Activated naive CD4-positive, alpha-beta T cell treated with anti-CD3 and anti-CD28 coated beads for 36 hours (primary cell): ENCODE measurements at regions of chr6 and their contacts with region 1.

Region 1: DNA sequence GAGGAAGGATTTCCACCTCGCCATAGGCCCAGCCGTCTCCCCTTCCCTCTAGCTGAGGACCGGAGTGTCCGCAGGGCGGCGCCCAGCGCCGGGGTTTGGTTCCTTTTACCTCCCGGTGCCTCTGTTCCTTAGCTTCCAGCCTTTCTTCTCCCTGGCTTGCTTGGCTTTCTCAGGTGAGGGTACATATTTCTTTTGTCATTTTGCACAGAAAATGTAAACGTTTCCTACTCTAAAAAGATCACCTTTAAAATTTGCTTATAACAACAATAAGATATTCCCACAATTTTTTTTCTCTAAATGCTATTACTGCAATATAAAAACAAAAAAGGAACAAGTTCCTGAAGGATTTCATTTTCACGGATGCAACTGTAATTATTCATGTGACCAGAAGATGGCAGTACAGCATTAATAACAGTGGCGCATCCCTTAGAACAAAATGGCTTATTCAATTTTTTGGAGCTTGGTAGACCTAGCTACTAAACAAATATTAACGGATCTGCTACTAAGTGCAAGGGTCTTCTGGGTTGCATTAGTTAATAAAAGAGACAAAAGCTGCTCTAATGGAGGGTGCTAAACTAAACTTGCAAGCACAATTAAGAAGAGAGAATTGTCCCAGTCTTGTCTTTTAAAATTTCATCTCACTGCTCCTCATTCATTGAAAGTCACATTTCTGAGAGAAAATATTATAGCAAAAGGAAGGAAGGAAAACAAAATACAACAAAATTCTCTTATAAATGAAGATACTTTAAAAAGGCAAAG is 172.9 kb downstream of the ADGRG6 start:
- DNase-seq: peak; percentile 10
- H3K4me3 Mint-ChIP-seq: no peak overlapping the region
- H3K27ac Mint-ChIP-seq: no peak overlapping the region
- H3K4me1 Mint-ChIP-seq: peaks cover 11% of the 10 kb centered on the region
- H3K27me3 Mint-ChIP-seq: no peaks in the 10 kb centered on the region

Region 2: GRCh38 chr6:142485256-142485655 is 10.5 kb after region 1 on chr6:
- CTCF ChIA-PET with region 1: interaction called, 14 read pairs
- intact Hi-C with region 1: no loop called
- DNase-seq: no peak
- H3K4me3 Mint-ChIP-seq: no peak overlapping the region
- H3K27ac Mint-ChIP-seq: no peak overlapping the region
- H3K4me1 Mint-ChIP-seq: peaks cover 3% of the 10 kb centered on the region
- H3K27me3 Mint-ChIP-seq: no peaks in the 10 kb centered on the region

Region 3: GRCh38 chr6:142686507-142686887 is 211.8 kb after region 1 on chr6:
- CTCF ChIA-PET with region 1: interaction called, 9 read pairs
- intact Hi-C with region 1: loop called (anchors 2 kb)
- DNase-seq: no peak
- H3K4me3 Mint-ChIP-seq: no peak overlapping the region
- H3K27ac Mint-ChIP-seq: no peak overlapping the region
- H3K4me1 Mint-ChIP-seq: peaks cover 32% of the 10 kb centered on the region
- H3K27me3 Mint-ChIP-seq: no peaks in the 10 kb centered on the region

Region 4: DNA sequence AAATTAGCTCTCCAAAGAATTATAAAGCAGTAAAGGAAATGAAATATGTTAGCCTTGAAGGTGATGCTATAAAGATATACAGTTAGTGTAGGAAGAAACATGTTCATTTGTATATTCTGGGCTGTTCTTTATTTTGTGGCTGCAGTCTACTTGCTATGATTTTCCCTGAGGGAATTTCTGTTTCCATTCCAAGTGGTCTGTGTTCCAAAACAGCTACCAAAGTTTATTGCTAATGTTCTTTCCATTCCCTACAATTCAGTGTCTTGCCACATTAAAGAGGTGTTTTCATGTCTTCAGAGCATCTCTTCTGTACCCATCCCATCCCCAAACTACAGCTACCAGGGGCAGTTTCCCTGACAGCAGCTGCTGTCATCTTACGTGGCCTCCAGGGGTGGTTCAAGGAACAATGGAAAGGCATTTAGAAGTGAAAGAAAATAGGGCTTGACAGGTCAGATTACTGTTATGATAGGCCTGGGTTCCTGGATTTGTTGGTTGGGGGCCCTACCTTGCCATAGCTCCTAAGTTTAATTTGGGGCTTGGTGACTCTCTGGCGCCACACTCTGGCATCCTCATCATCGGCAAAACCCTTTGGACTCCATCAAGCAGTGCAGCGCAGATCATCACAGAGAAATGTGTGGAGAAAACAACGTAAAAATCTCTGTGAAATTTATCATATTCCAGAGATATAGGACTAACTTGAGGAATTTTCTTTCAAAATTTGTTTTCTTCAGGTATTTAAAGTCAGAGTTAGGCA is 552.2 kb after region 1 on chr6:
- CTCF ChIA-PET with region 1: interaction called, 8 read pairs
- intact Hi-C with region 1: loop called (anchors 1 kb)
- DNase-seq: peak; percentile 76
- H3K4me3 Mint-ChIP-seq: no peak overlapping the region
- H3K27ac Mint-ChIP-seq: no peak overlapping the region
- H3K4me1 Mint-ChIP-seq: peaks cover 7% of the 10 kb centered on the region
- H3K27me3 Mint-ChIP-seq: no peaks in the 10 kb centered on the region

Region 5: GRCh38 chr6:143427109-143427817 is 952.6 kb after region 1 on chr6:
- CTCF ChIA-PET with region 1: interaction called, 5 read pairs
- intact Hi-C with region 1: loop called (anchors 1 kb)
- DNase-seq: peak; percentile 76
- H3K4me3 Mint-ChIP-seq: no peak overlapping the region
- H3K27ac Mint-ChIP-seq: no peak overlapping the region
- H3K4me1 Mint-ChIP-seq: peaks cover 14% of the 10 kb centered on the region
- H3K27me3 Mint-ChIP-seq: no peaks in the 10 kb centered on the region

Region 6: DNA sequence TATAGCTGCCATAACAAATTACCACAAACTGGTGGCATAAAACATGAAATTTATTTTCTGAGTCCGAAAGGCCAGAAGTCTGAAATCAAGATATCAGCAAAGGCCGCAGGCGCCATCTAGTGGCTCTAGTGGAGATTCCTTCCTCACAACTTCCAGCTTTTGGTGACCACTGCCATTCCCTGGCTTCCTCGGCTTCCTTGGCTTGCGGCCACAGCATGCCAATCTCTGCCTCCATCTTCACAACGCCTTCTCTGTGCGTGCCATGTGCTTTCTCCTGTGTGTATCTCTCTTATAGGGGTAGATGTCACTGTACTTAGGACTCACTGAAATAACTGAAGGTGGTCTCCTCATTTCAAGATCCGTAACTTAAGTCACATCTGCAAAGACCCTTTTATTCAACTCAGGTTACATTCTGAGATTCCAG is 1538.8 kb after region 1 on chr6:
- CTCF ChIA-PET with region 1: interaction called, 3 read pairs
- intact Hi-C with region 1: loop called (anchors 1 kb)
- DNase-seq: peak; percentile 78
- H3K4me3 Mint-ChIP-seq: no peak overlapping the region
- H3K27ac Mint-ChIP-seq: no peak overlapping the region
- H3K4me1 Mint-ChIP-seq: peaks cover 2% of the 10 kb centered on the region
- H3K27me3 Mint-ChIP-seq: peaks cover 10% of the 10 kb centered on the region